GM12878 (cell line): ENCODE measurements at regions of chr7 and their contacts with region 1.

Region 1: DNA sequence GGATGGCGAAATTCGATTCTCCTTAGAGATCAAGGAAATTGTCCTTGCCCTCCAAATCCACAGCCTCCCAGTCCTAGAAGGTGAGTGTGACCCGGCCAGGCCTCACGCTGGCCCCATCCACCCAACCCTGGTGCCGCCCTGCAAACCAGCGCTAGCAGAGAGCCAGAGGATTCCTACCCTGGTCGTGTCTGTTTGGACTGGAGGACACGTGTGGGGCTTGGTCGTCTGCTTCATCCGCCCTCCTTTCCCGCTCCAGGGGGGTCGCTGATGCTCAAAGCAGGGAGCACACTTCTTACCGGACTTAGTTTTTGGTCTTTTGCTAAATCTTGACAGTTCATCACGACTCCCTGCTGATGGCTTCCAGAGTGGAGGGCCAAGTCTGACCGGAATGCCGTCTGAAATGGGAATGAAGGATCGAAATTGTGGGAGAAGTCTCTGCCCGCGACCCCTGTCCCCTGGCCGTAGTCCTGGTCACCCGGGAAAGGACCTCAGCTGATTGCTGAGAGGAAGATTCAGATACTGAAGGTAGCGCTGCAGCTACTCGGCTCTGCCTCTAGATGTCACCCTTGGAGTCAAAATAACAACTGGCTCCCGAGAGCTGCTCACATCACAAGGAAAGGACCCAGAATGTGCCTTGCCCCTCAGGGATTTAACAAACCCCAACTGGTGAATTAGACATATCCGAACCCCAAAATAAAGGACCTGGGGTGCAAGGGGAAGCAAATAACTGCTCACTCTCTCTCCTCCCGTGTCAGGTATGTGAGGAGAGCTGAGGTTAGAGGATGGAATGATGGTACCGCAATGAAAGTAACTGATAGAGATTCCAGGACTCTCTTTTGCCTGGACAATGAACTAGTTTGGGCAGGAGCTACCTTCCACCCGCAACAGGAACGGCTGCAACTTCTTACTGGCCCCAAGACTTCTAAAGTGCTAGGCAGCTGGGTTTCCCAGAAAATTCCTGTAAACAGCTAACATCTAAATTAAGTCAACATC is 23.5 kb upstream of the ORC5 start:
- DNase-seq: no peak
- ATAC-seq: peak; percentile 96
- H3K4me3 ChIP-seq: no peak overlapping the region
- H3K27ac ChIP-seq: no peak overlapping the region
- H3K4me1 ChIP-seq: no peaks in the 10 kb centered on the region
- H3K27me3 ChIP-seq: no peaks in the 10 kb centered on the region
- CTCF ChIP-seq: peak; percentile 83 to 91 (median 87)
- EP300 ChIP-seq: no peak
- POLR2A ChIP-seq: no peak
- RAD21 ChIP-seq: peak; percentile 74

Region 2: GRCh38 chr7:104207731-104208420 is 23.5 kb before region 1 on chr7 and contains the start of gene ORC5:
- CTCF ChIA-PET with region 1: interaction called, 15 read pairs
- POLR2A ChIA-PET with region 1: no interaction called
- RAD21 ChIA-PET with region 1: interaction called, 5 read pairs
- SMC1A ChIA-PET with region 1: no interaction called
- in situ Hi-C with region 1: no loop called
- intact Hi-C with region 1: no loop called
- DNase-seq: peak; percentile 44
- ATAC-seq: peak; percentile 99
- H3K4me3 ChIP-seq: peak within 1 kb of the TSS; percentile 93
- H3K27ac ChIP-seq: peak within 1 kb of the TSS; percentile 84
- H3K4me1 ChIP-seq: peaks cover 4% of the 10 kb centered on the region
- H3K27me3 ChIP-seq: no peaks in the 10 kb centered on the region
- CTCF ChIP-seq: no peak
- EP300 ChIP-seq: no peak
- POLR2A ChIP-seq: peak; percentile 97
- RAD21 ChIP-seq: no peak
- polyA plus RNA-seq, gene ORC5: 42.2 to 58.6 TPM

Region 3: DNA sequence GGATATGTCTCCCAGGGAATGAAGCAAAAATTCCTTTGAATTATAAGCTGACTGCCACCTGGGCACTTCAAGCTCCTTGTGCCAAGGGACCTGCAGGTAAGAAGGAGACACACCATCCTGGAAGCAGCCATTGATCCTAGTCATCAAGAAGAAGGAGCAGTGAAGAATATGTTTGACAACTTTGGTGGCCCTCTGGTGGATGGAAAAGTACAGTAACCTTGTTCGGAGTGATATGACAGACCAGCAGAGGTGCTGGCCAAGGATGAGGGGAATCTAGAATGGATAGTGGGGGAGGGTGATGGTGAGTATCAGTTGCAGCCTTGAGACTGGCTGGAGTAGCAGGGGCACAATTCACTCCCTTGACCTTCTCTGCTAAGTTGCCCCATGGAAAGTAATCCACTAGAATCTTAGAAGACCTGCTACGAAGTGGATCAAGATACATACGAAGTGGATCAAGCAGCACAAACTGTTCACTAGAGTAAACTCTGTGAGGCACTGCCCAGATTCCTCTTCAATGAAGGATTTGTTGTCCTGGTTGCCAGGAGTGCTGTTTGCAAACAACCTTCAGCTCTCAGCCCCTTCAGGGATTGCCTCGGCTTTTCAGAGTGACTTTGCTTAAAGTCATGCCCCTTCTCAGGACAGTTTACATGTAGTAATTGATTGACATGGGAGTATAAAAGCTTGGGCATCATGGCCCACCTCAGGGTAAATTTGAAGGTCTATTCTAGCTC is 21.2 kb after region 1 on chr7:
- CTCF ChIA-PET with region 1: interaction called, 19 read pairs
- POLR2A ChIA-PET with region 1: no interaction called
- RAD21 ChIA-PET with region 1: interaction called, 3 read pairs
- SMC1A ChIA-PET with region 1: no interaction called
- in situ Hi-C with region 1: no loop called
- intact Hi-C with region 1: no loop called
- DNase-seq: no peak
- ATAC-seq: no peak
- H3K4me3 ChIP-seq: no peak overlapping the region
- H3K27ac ChIP-seq: no peak overlapping the region
- H3K4me1 ChIP-seq: no peaks in the 10 kb centered on the region
- H3K27me3 ChIP-seq: no peaks in the 10 kb centered on the region
- CTCF ChIP-seq: peak in 2 of 3 experiments; percentile 2 to 10; a peak in 1 of 6 replicates
- EP300 ChIP-seq: no peak
- POLR2A ChIP-seq: no peak
- RAD21 ChIP-seq: no peak

Region 4: GRCh38 chr7:104267701-104268368 is 36.5 kb after region 1 on chr7:
- CTCF ChIA-PET with region 1: interaction called, 63 read pairs
- POLR2A ChIA-PET with region 1: no interaction called
- RAD21 ChIA-PET with region 1: interaction called, 8 read pairs
- SMC1A ChIA-PET with region 1: interaction called, 9 read pairs
- in situ Hi-C with region 1: no loop called
- intact Hi-C with region 1: no loop called
- DNase-seq: no peak
- ATAC-seq: no peak
- H3K4me3 ChIP-seq: no peak overlapping the region
- H3K27ac ChIP-seq: no peak overlapping the region
- H3K4me1 ChIP-seq: no peaks in the 10 kb centered on the region
- H3K27me3 ChIP-seq: no peaks in the 10 kb centered on the region
- CTCF ChIP-seq: peak; percentile 43 to 52 (median 46); a peak in 5 of 6 replicates
- EP300 ChIP-seq: no peak
- POLR2A ChIP-seq: no peak
- RAD21 ChIP-seq: peak; percentile 31

Region 5: DNA sequence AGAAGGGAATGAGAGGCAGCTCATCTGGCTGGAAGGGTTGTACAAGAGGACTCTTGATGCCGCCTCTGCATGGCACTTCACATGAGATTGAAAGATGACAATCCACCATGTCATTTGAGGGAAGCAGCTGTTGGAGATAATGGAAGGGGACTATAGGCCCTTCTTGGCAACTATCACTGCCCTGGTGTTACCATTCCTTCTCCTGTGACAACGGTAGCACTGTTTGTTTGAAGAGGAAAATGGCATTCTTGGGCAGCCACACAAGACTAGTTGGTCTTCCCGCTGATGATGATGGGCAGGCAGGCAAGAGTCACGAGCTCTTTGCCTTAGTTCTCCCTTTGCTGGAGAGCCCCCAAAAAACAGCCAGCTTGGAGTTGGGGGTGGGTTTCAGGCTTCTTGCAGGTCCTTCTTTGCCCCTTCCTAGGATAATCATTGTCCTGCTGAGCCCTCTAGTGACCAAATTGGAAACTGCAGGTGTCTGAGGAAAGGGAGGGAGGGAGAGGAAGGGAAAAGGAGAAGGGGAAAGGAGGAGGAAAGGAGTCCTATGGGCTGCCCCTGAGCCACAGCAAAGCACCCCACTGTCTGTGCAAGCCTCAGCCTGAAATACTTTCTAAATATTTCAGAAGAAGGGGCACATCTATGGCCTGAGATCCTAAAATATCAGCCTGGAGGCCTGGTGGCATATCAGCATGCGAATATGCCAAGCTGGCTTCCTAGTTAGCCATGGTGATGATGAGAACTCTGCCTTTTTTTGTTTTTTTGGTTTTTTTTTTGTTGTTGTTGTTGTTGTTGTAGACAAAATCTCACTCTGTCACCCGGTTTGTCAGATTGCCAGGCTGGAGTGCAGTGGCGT is 617.0 kb after region 1 on chr7:
- CTCF ChIA-PET with region 1: interaction called, 30 read pairs
- POLR2A ChIA-PET with region 1: no interaction called
- RAD21 ChIA-PET with region 1: interaction called, 11 read pairs
- SMC1A ChIA-PET with region 1: interaction called, 4 read pairs
- in situ Hi-C with region 1: no loop called
- intact Hi-C with region 1: loop called (anchors 5 kb)
- DNase-seq: no peak
- ATAC-seq: peak; percentile 78
- H3K4me3 ChIP-seq: no peak overlapping the region
- H3K27ac ChIP-seq: no peak overlapping the region
- H3K4me1 ChIP-seq: peaks cover 4% of the 10 kb centered on the region; the same call in 1 of the 2 replicates
- H3K27me3 ChIP-seq: no peaks in the 10 kb centered on the region
- CTCF ChIP-seq: peak; percentile 76 to 89 (median 79)
- EP300 ChIP-seq: no peak
- POLR2A ChIP-seq: no peak
- RAD21 ChIP-seq: peak; percentile 90

Region 6: DNA sequence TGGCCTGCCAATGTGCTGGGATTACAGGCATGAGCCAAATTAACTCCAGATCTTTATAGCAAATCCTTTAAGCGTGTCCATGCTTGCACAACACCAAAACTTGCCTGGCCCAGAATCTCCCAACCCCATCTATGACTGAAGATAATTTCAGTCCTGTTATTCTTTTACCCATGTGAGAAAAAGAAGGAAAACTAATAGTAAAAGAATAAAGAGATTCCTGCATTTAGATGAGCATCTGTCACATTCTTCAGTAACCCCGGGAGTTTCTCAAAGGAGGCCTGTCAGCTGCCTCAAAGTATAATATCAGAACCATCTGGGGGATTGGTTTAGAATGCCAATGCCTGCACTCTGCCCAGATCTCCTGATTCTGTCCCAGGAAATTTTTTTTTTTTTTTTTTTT is 624.5 kb after region 1 on chr7:
- CTCF ChIA-PET with region 1: interaction called, 10 read pairs
- POLR2A ChIA-PET with region 1: no interaction called
- RAD21 ChIA-PET with region 1: no interaction called
- SMC1A ChIA-PET with region 1: no interaction called
- in situ Hi-C with region 1: no loop called
- intact Hi-C with region 1: no loop called
- DNase-seq: no peak
- ATAC-seq: no peak
- H3K4me3 ChIP-seq: no peak overlapping the region
- H3K27ac ChIP-seq: no peak overlapping the region
- H3K4me1 ChIP-seq: peaks cover 10% of the 10 kb centered on the region
- H3K27me3 ChIP-seq: no peaks in the 10 kb centered on the region
- CTCF ChIP-seq: no peak
- EP300 ChIP-seq: no peak
- POLR2A ChIP-seq: no peak
- RAD21 ChIP-seq: no peak

Region 7: GRCh38 chr7:104914421-104914820 is 683.1 kb after region 1 on chr7:
- CTCF ChIA-PET with region 1: interaction called, 40 read pairs
- POLR2A ChIA-PET with region 1: interaction called, 3 read pairs
- RAD21 ChIA-PET with region 1: interaction called, 40 read pairs
- SMC1A ChIA-PET with region 1: interaction called, 25 read pairs
- in situ Hi-C with region 1: no loop called
- intact Hi-C with region 1: loop called (anchors 1 kb)
- DNase-seq: no peak
- ATAC-seq: no peak
- H3K4me3 ChIP-seq: no peak overlapping the region
- H3K27ac ChIP-seq: no peak overlapping the region
- H3K4me1 ChIP-seq: peaks cover 4% of the 10 kb centered on the region; the same call in 1 of the 2 replicates
- H3K27me3 ChIP-seq: no peaks in the 10 kb centered on the region
- CTCF ChIP-seq: no peak
- EP300 ChIP-seq: no peak
- POLR2A ChIP-seq: no peak
- RAD21 ChIP-seq: no peak